ENCODE measurements at regions of chr6 and their contacts with region 1.

Region 1: GRCh38 chr6:125790358-125791150 is at the start of gene NCOA7:
- DNase-seq: peak; percentile 76
- H3K4me3 ChIP-seq: peak within 1 kb of the TSS; percentile 74 to 92 (median 75)
- H3K27ac ChIP-seq: peak within 1 kb of the TSS; percentile 58
- H3K4me1 ChIP-seq: peaks cover 39% of the 10 kb centered on the region
- H3K27me3 ChIP-seq: no peaks in the 10 kb centered on the region
- CTCF ChIP-seq: peak in 1 of 2 donors; percentile 8
- total RNA-seq, gene NCOA7: 29.0 to 29.1 TPM

Region 2: DNA sequence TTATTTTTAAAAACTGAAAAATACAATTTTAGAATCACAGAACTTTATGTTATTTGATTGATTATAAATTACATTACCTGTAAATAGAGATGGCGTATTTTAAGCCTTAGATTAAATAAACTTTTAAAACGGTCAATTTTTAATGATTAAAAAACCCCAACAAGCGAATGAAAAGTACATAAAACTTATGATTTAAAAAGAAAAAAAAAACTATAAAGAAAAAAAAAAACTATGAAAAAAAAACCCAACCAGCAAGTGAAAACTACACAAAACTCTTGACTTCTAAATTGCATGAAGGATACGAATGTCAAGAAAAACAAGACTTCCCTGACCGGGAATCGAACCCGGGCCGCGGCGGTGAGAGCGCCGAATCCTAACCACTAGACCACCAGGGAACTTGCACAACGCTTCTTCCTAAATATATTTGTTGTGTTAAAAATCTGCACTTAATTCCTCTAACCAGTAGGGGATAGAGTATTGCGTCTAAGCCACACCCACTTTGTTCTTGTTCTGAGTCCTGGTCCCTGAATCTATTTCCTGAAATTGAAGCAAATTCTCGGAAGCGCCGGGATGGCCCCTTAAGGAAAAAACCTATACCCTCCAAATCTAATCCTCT is 10.5 kb before region 1 on chr6:
- CTCF ChIA-PET with region 1: interaction called, 4 read pairs
- dilution Hi-C with region 1: no loop called
- in situ Hi-C with region 1: no loop called
- intact Hi-C with region 1: loop called (anchors 1 kb)
- DNase-seq: peak; percentile 86
- H3K4me3 ChIP-seq: peak overlapping the region; percentile 69 to 98 (median 85)
- H3K27ac ChIP-seq: peak overlapping the region; percentile 95
- H3K4me1 ChIP-seq: peaks cover 4% of the 10 kb centered on the region
- H3K27me3 ChIP-seq: peaks cover 2% of the 10 kb centered on the region
- CTCF ChIP-seq: peak in 1 of 2 donors; percentile 38

Region 3: DNA sequence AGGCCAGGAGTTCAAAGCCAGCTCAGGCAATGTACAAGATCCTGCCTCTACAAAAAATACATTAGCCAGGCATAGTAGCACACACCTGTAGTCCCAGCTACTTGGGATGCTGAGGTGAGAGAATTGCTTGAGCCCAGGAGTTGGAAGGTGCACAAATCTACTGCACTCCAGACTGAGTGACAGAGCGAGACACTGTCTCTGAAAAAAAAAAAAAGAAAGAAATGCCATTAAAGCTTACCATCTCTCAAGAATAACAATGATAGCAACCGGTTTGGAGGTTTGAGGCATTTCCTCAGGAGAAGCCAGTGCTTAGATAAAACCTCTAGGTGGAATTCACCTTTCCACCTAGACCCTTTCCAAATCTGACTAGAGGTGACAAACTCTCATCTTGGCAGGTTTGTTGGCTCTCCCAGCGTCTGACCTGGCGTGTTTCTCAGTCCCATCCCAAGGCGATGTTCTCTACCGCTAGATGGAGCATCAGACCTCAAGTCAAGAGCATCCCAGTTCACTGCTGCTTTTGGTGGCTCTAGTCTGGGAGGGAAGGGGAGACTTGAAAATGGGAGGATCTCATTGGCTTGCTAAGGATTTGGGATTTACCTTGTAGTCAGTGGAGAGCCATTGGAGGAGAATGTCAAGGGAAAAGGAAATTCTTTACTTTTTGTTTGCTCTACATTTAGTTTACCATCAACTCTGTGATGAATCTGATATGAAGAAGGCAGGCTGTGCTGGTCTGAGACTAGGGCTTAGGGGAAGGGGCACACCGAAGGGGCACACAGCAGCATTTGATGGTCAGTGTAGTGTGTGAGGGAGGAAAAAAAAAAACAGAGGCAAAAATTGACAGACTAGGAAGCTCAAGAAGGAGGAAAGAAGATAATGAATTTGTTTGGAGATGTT is 68.1 kb after region 1 on chr6:
- CTCF ChIA-PET with region 1: no interaction called
- dilution Hi-C with region 1: no loop called
- in situ Hi-C with region 1: no loop called
- intact Hi-C with region 1: loop called (anchors 5 kb)
- DNase-seq: peak; percentile 73
- H3K4me3 ChIP-seq: no peak overlapping the region
- H3K27ac ChIP-seq: no peak overlapping the region
- H3K4me1 ChIP-seq: no peaks in the 10 kb centered on the region
- H3K27me3 ChIP-seq: no peaks in the 10 kb centered on the region
- CTCF ChIP-seq: peak; percentile 91 to 92

Region 4: DNA sequence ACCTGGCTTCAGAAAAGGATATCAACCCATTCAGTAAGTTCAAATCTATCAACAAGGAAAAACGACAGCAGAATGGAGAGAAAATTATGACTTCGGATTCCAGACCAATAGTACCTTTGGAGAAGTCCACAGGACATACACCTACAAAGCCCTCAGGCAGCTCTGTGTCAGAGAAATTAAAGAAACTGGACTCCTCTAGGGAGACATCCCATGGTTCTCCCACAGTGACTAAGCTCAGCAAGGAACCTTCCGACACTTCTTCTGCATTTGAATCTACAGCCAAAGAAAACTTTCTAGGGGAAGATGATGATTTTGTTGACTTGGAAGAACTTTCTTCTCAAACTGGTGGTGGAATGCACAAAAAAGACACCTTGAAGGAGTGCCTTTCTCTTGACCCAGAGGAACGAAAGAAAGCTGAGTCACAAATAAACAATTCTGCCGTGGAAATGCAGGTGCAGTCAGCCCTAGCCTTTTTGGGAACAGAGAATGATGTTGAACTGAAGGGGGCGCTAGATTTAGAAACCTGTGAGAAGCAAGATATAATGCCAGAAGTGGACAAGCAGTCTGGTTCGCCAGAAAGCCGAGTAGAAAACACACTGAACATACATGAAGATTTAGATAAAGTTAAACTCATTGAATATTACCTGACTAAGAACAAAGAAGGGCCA is 98.6 kb after region 1 on chr6:
- CTCF ChIA-PET with region 1: no interaction called
- dilution Hi-C with region 1: no loop called
- in situ Hi-C with region 1: no loop called
- intact Hi-C with region 1: no loop called
- DNase-seq: peak; percentile 54
- H3K4me3 ChIP-seq: no peak overlapping the region
- H3K27ac ChIP-seq: no peak overlapping the region
- H3K4me1 ChIP-seq: no peaks in the 10 kb centered on the region
- H3K27me3 ChIP-seq: no peaks in the 10 kb centered on the region
- CTCF ChIP-seq: peak; percentile 46 to 60

Region 5: DNA sequence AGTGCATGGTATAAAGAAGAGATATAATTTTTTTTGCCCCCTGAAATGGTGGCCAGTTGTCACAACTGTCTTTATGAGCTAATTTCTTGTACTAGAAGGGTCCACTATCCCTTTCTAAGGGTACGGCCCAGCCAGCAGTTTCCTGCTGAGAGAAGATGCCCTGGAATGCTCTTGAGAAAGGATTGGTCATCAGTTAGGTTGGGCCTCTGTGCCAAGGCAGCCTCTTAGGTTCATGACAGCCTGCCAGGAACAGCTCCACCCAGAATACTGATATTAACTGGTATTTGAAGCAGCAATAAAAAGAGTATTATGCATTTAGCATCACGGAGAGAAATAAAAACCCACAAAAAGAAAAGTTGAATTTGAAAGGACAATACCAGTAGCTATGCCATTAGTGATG is 157.0 kb after region 1 on chr6:
- CTCF ChIA-PET with region 1: no interaction called
- dilution Hi-C with region 1: loop called (anchors 5 kb)
- in situ Hi-C with region 1: loop called (anchors 10 kb)
- intact Hi-C with region 1: no loop called
- DNase-seq: peak; percentile 67
- H3K4me3 ChIP-seq: no peak overlapping the region
- H3K27ac ChIP-seq: peak overlapping the region; percentile 9
- H3K4me1 ChIP-seq: peaks cover 60% of the 10 kb centered on the region
- H3K27me3 ChIP-seq: no peaks in the 10 kb centered on the region
- CTCF ChIP-seq: no peak

Region 6: DNA sequence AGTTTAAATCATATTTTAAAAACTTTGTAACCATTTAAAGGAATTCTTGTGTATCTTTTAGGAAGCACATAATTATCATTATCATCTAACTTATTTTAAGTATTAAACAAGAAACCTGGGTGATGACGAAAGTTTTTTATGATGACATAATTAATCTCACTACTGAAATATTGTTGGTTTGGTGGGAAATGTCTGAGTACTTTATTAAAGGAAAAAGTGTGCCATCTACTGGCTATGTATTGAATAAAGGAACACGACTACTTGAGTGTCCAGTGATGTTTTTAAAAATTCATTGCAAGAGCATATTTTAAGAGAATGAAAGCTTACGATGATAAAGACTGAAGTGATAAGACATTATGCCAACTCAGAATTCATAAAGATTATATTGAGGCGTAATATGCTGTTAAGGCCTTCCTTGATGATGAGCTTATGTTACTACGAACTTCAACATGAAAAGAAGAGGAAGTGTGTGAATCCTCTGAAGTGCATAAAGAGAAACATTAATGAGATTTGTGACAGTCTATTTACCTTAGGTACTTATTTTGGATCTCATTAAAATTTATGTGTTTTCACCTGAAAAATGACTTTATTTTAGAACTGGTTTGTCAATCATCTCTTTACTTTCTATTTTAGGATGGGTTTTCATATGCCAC is 183.8 kb after region 1 on chr6:
- CTCF ChIA-PET with region 1: no interaction called
- dilution Hi-C with region 1: no loop called
- in situ Hi-C with region 1: no loop called
- intact Hi-C with region 1: loop called (anchors 2 kb)
- DNase-seq: peak; percentile 37
- H3K4me3 ChIP-seq: no peak overlapping the region
- H3K27ac ChIP-seq: no peak overlapping the region
- H3K4me1 ChIP-seq: no peaks in the 10 kb centered on the region
- H3K27me3 ChIP-seq: no peaks in the 10 kb centered on the region
- CTCF ChIP-seq: peak; percentile 30 to 48